HCT116 (cell line): ENCODE measurements at regions of chr6 and their contacts with region 1.

Region 1: DNA sequence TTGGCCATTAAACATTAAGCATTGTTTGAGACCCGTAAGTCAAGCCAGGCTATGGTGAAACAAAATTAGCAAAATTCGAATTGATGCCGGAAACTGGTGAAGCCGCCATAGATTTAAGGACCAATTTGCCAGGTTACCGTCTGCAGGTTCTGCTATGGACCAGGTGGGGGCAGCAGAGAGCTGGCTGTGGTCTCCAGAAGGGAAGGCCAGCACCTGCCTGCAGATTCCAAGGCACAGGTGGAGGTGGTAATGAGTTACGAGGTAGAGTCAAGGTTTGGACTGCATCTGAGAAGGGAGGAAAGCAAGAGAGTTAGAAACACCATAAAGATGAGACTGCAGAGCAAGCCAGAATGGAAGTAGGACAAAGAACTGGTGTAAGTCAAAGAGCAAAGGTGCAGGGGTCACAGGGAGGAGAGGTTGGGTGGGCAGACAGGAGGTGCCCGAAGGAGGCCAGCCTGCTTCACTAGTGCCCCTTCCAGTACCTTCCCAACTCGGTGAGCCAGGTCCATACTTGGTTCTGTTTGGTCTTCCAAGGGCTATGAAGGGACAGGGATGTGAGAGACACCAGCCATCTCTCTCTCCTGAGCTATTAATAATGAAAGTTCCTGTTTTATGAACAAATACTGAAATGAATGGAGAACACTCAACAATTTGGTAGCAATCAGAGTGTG is 131.6 kb upstream of the ESR1 start:
- DNase-seq: peak; percentile 57
- ATAC-seq: peak; percentile 97
- H3K4me3 ChIP-seq: peak overlapping the region in 1 of 2 experiments; percentile 20; a peak in 1 of 4 replicates
- H3K27ac ChIP-seq: no peak overlapping the region
- H3K4me1 ChIP-seq: peaks cover 0 to 10% of the 10 kb centered on the region in 2 experiments; a peak in 1 of 4 replicates
- H3K27me3 ChIP-seq: no peaks in the 10 kb centered on the region
- CTCF ChIP-seq: peak; percentile 83 to 98 (median 98)
- POLR2A ChIP-seq: no peak
- RAD21 ChIP-seq: peak; percentile 93

Region 2: DNA sequence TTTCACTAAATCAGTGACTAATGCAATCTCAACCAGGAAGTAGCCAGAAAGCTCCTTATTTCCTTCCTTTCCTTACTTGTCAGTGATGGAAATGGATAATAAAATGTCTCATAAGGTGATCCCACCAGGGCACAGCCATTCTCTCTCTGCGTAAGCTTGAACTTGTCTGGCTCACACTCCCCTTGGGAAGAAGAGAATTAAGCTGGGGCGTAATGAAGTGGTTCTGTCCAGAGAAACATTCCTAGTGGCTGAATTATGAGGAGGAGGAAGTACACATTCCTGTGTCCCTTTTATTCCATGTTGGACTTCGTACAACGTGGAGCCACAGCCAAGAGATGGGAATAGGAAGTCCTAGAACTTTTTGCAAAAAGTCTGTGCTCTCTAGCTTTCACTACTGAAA is 716.7 kb before region 1 on chr6:
- CTCF ChIA-PET with region 1: no interaction called
- POLR2A ChIA-PET with region 1: no interaction called
- RAD21 ChIA-PET with region 1: no interaction called
- intact Hi-C with region 1: no loop called
- DNase-seq: no peak
- ATAC-seq: no peak
- H3K4me3 ChIP-seq: no peak overlapping the region
- H3K27ac ChIP-seq: no peak overlapping the region
- H3K4me1 ChIP-seq: no peaks in the 10 kb centered on the region
- H3K27me3 ChIP-seq: no peaks in the 10 kb centered on the region
- CTCF ChIP-seq: no peak
- POLR2A ChIP-seq: no peak
- RAD21 ChIP-seq: no peak

Region 3: GRCh38 chr6:151652290-151652689 is 23.6 kb before region 1 on chr6:
- CTCF ChIA-PET with region 1: no interaction called
- POLR2A ChIA-PET with region 1: no interaction called
- RAD21 ChIA-PET with region 1: no interaction called
- intact Hi-C with region 1: no loop called
- DNase-seq: no peak
- ATAC-seq: no peak
- H3K4me3 ChIP-seq: no peak overlapping the region
- H3K27ac ChIP-seq: no peak overlapping the region
- H3K4me1 ChIP-seq: peaks cover 0 to 10% of the 10 kb centered on the region in 2 experiments; a peak in 2 of 4 replicates
- H3K27me3 ChIP-seq: no peaks in the 10 kb centered on the region
- CTCF ChIP-seq: no peak
- POLR2A ChIP-seq: no peak
- RAD21 ChIP-seq: no peak

Region 4: DNA sequence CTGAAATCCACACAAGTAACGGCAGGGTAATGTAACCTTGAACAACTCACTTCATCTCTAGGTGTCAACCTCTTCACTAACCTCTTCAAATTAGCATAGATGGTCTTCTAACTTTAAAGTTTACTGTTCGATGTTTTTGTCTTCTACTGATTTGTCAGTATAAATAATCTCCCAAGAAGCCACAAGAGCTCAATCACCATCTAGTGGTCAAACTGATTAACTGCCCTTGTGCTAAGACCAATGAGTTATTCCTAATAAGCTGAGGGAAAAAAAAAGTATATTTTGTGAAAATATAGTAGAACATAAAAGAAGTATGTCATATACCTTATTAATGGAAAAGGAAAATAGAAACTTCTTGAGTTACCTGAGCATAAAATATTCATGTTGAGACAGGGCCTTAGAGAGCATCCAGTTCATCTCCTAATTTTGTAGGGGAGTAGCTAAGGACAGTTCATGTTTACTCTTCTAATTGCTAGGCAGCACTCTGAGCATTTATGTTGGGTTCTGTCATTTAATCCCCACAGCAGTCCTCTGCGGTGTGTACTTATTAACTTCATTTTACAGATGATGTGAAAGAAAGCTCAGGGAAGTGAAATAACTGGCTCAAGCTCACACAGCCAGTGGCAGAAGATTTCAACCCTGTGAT is 448.7 kb after region 1 on chr6:
- CTCF ChIA-PET with region 1: interaction called, 14 read pairs
- POLR2A ChIA-PET with region 1: no interaction called
- RAD21 ChIA-PET with region 1: interaction called in 1 of 2 experiments, 3 read pairs
- intact Hi-C with region 1: no loop called
- DNase-seq: peak; percentile 56
- ATAC-seq: peak; percentile 90
- H3K4me3 ChIP-seq: no peak overlapping the region
- H3K27ac ChIP-seq: no peak overlapping the region
- H3K4me1 ChIP-seq: no peaks in the 10 kb centered on the region
- H3K27me3 ChIP-seq: no peaks in the 10 kb centered on the region
- CTCF ChIP-seq: peak; percentile 72 to 88 (median 83)
- POLR2A ChIP-seq: no peak
- RAD21 ChIP-seq: peak; percentile 93

Region 5: GRCh38 chr6:152267967-152268845 is 592.3 kb after region 1 on chr6:
- CTCF ChIA-PET with region 1: no interaction called
- POLR2A ChIA-PET with region 1: no interaction called
- RAD21 ChIA-PET with region 1: no interaction called
- intact Hi-C with region 1: loop called (anchors 1 kb)
- DNase-seq: no peak
- ATAC-seq: no peak
- H3K4me3 ChIP-seq: no peak overlapping the region
- H3K27ac ChIP-seq: no peak overlapping the region
- H3K4me1 ChIP-seq: no peaks in the 10 kb centered on the region
- H3K27me3 ChIP-seq: no peaks in the 10 kb centered on the region
- CTCF ChIP-seq: peak; percentile 43 to 71 (median 71); a peak in 4 of 6 replicates
- POLR2A ChIP-seq: no peak
- RAD21 ChIP-seq: peak; percentile 73

Region 6: GRCh38 chr6:152356451-152357061 is 680.7 kb after region 1 on chr6:
- CTCF ChIA-PET with region 1: no interaction called
- POLR2A ChIA-PET with region 1: no interaction called
- RAD21 ChIA-PET with region 1: no interaction called
- intact Hi-C with region 1: loop called (anchors 5 kb)
- DNase-seq: peak; percentile 27
- ATAC-seq: peak; percentile 85
- H3K4me3 ChIP-seq: no peak overlapping the region
- H3K27ac ChIP-seq: no peak overlapping the region
- H3K4me1 ChIP-seq: no peaks in the 10 kb centered on the region
- H3K27me3 ChIP-seq: no peaks in the 10 kb centered on the region
- CTCF ChIP-seq: peak; percentile 23 to 51 (median 24); a peak in 3 of 6 replicates
- POLR2A ChIP-seq: no peak
- RAD21 ChIP-seq: peak; percentile 69